Activated T-helper 1 cell treated with anti-CD3 and anti-CD28 coated beads, Interleukin-12 subunit alpha, Interleukin-12 subunit beta, Interleukin-2, Interleukin-4 antibody, amounts not matched to agents 30 ng/mL and 10 ng/mL and 1 ng/mL, durations not matched to agents 14 hours and 24 hours and 36 hours (primary cell): ENCODE measurements at regions of chr15 and their contacts with region 1.

Region 1: DNA sequence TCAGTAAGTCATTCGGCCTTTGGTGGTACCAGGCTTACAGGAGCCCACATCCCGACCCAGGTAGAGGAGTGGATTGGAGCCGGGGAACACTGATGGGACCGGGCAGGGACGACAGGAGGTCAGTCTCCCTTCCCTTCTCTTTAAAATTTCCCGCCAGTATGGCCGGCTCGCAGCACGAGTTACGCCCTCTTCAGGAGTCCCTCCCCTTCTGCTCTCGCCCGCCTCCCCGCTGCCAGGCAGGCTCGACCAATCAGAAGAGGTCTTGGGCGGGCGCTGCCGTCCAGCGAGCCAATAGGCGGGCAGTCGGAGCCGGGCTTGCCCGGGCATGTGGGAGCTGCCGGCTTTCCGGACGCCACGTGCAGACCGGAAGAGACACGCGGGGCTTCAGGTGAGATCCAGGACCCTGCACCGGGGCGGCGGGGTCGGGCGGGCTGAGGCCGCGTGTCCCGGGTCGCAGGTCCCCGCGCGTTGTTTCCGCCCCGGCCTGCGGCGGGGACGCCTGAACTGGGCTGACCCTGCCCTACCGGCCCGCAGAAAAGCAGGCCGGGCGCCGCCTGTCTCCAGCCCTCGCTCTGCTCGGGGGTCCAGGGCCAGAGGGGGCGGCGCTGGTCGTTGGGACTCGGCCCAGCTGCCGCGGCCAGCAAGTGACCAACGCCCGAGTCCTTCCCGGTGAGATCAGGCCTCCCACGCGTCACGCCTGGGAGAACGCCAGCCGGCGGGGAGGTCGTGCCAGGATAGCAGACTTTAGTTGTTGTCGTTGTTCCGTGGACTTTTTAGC is at the start of gene AEN:
- DNase-seq: peak; percentile 96
- H3K4me3 Mint-ChIP-seq: peak within 1 kb of the TSS; percentile 97
- H3K27ac Mint-ChIP-seq: peak within 1 kb of the TSS; percentile 94
- H3K4me1 Mint-ChIP-seq: peaks cover 44% of the 10 kb centered on the region
- H3K27me3 Mint-ChIP-seq: no peaks in the 10 kb centered on the region
- total RNA-seq, gene AEN: 74.2 and 76.4 TPM in 2 replicates

Region 2: GRCh38 chr15:88467073-88467934 is 153.9 kb before region 1 on chr15 and contains the starts of genes MRPL46 and MRPS11:
- intact Hi-C with region 1: loop called (anchors 1 kb)
- DNase-seq: peak; percentile 86
- H3K4me3 Mint-ChIP-seq: peak within 1 kb of the TSS; percentile 96
- H3K27ac Mint-ChIP-seq: peak within 1 kb of the TSS; percentile 95
- H3K4me1 Mint-ChIP-seq: peaks cover 37% of the 10 kb centered on the region
- H3K27me3 Mint-ChIP-seq: no peaks in the 10 kb centered on the region
- total RNA-seq, gene MRPL46: 47.5 and 49.1 TPM in 2 replicates
- total RNA-seq, gene MRPS11: 68.3 and 78.0 TPM in 2 replicates

Region 3: DNA sequence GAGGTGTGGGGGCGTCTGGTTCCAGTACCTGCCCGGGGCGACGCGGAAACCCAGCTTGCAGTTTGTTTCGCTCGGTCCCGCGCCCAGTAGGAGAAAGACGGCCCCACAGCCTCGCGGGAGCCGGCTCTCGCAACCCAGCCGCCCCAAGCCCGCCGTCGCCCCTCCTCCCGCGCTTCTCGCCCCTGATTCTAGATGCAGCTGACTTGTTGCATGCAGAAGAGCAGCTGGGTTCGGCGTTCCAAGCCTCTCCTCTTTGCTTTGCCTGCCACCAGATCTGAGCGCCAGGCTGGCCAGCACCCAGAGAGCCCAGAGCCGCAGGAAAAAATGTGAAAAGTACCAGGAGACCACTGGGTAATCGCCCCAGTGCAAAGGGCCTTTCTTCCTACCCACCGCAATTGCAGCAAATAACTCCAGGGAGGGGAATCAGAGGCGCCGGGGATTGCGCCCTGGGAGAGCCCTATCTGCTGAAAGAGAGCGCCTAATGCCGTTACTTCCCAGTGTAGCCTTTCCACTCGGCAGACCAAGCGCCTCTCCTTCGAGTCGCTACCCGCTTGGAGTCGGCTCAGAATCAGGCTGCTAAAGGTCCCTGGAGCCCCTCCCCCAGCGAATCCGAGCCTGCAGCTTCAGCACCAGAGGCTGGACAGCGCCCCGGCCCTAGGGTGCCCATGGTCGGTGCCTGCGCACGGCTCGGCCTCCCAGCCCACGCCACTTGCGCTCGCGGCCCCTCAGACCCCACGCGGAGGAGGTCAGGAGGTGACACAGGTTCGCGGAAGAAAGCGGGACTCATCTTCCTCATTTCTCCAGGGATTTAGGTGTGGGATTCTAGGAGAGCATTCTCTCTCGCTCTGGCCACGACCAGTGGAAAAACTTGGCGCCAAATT is 15.8 kb before region 1 on chr15:
- intact Hi-C with region 1: loop called (anchors 2 kb)
- DNase-seq: no peak
- H3K4me3 Mint-ChIP-seq: no peak overlapping the region
- H3K27ac Mint-ChIP-seq: no peak overlapping the region
- H3K4me1 Mint-ChIP-seq: peaks cover 5% of the 10 kb centered on the region
- H3K27me3 Mint-ChIP-seq: peaks cover 67% of the 10 kb centered on the region

Region 4: GRCh38 chr15:88701561-88702095 is 80.4 kb after region 1 on chr15:
- intact Hi-C with region 1: loop called (anchors 5 kb)
- DNase-seq: no peak
- H3K4me3 Mint-ChIP-seq: no peak overlapping the region
- H3K27ac Mint-ChIP-seq: no peak overlapping the region
- H3K4me1 Mint-ChIP-seq: peaks cover 16% of the 10 kb centered on the region
- H3K27me3 Mint-ChIP-seq: peaks cover 47% of the 10 kb centered on the region

Region 5: GRCh38 chr15:88714782-88715372 is 93.7 kb after region 1 on chr15:
- intact Hi-C with region 1: no loop called
- DNase-seq: no peak
- H3K4me3 Mint-ChIP-seq: no peak overlapping the region
- H3K27ac Mint-ChIP-seq: no peak overlapping the region
- H3K4me1 Mint-ChIP-seq: no peaks in the 10 kb centered on the region
- H3K27me3 Mint-ChIP-seq: peaks cover 4% of the 10 kb centered on the region

Region 6: GRCh38 chr15:88897456-88898194 is 276.4 kb after region 1 on chr15:
- intact Hi-C with region 1: loop called (anchors 1 kb)
- DNase-seq: peak; percentile 78
- H3K4me3 Mint-ChIP-seq: no peak overlapping the region
- H3K27ac Mint-ChIP-seq: no peak overlapping the region
- H3K4me1 Mint-ChIP-seq: peaks cover 35% of the 10 kb centered on the region
- H3K27me3 Mint-ChIP-seq: no peaks in the 10 kb centered on the region

Region 7: GRCh38 chr15:89017370-89018066 is 396.3 kb after region 1 on chr15:
- intact Hi-C with region 1: loop called (anchors 1 kb)
- DNase-seq: peak; percentile 70
- H3K4me3 Mint-ChIP-seq: peak overlapping the region; percentile 61
- H3K27ac Mint-ChIP-seq: peak overlapping the region; percentile 61
- H3K4me1 Mint-ChIP-seq: peaks cover 27% of the 10 kb centered on the region
- H3K27me3 Mint-ChIP-seq: peaks cover 32% of the 10 kb centered on the region

Region 8: DNA sequence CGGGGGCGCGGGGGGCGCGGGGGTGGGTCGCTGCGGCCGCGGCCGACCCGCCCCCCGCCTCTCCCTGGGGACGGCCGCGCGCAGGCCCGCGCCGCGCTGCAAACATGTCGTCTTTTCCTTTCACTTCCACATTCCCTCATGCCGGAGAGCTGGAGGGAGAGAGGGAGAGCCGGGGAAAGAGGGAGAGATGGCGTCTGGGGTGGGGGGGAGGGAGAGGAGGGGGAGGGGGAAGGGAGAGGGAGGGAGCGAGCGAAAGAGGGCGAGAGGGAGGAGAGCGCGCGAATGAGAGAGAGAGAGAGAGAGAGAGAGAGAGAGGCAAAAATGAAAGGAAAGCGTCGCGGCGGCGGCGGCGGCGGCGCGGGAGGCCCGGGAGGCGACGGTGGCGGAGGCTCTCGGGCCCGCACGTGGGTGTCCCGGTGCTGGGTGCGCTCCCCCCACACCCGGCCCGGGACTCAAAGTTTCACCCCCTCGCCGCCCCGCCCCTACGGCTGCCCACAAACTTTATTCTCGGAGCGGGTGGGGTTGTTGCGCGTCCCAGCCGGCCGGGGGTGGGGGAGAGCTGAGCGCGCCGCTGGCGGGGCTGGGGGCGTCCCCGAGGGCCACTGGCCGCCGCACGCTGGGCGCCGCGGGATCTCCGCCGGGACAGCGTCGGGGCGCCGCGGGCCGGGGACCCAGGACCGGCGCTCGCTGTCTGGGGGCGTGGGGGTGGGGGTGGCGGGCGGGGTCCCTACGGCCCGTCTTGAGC is 1380.7 kb after region 1 on chr15:
- intact Hi-C with region 1: loop called (anchors 5 kb)
- DNase-seq: peak; percentile 53
- H3K4me3 Mint-ChIP-seq: peak overlapping the region; percentile 85
- H3K27ac Mint-ChIP-seq: peak overlapping the region; percentile 86
- H3K4me1 Mint-ChIP-seq: peaks cover 53% of the 10 kb centered on the region
- H3K27me3 Mint-ChIP-seq: peaks cover 11% of the 10 kb centered on the region